SK-N-SH (cell line): ENCODE measurements at regions of chr22 and their contacts with region 1.

Region 1: DNA sequence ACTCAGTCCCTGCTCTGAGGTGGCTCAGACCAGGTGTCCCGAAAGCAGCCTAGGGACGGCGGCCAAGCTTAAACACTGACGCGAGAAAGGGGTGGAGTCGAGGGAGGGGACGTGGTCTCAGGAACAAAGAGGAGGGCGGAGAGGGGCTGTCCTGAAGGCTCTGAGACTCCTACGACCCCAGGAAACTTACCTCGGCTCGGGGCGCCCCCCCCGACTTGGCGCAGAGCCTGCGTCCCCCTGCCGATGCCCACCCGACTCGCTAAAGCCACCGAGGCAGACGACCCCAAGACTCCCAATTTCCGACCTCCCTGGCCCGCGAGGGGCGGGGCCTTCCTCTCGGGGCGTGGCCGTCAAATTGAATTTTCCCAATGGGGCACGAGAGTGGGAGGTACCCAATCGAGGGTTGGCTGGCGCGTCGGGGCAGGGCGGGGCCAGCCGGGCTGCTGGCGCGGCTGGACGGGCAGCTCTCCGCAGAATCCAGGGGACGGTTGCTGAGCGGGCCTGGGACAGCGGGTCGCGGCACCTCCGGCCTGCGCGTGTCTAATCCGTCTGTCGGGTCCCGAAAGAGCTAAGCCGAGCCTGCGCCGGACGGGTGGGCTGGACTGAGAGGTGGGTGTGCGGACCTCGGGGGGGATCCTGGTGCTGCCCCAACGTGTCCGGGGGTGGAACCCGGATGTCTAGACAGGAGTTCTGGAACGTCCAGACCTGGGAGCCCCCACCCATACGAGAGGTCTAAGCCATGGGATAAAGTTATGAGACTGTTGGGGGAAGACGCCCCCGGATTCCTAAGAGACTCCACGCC is at the start of gene SMTN:
- DNase-seq: peak; percentile 97
- H3K4me3 ChIP-seq: peak within 1 kb of the TSS; percentile 86 to 89
- H3K27ac ChIP-seq: peak within 1 kb of the TSS; percentile 71 to 94
- H3K4me1 ChIP-seq: peaks cover 21 to 40% of the 10 kb centered on the region in 2 experiments; a peak in 2 of 4 replicates
- H3K27me3 ChIP-seq: no peaks in the 10 kb centered on the region
- CTCF ChIP-seq: peak; percentile 10; the same call in 1 of the 2 replicates
- EP300 ChIP-seq: no peak
- RAD21 ChIP-seq: no peak
- polyA plus RNA-seq, gene SMTN: 12.5 and 30.4 TPM in 2 replicates

Region 2: DNA sequence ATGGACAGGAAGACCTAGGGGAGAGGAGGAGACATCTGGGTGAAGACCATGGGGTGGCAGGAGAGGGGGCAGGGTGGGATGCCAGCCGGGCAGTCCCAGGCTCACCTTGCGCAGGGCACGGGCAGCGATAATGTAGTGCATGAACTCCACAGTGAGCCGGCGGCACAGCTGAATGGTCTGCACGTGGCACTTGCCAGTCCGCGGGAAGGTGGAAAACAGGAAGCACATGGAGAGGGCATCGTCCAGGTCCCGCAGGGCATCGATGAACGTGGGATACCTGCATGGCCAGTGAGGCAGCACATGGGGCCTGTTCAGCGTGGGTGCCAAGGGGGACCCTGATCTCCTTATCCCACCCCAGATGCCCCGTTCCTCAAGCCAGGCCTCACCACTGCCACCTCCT is 496.6 kb before region 1 on chr22:
- CTCF ChIA-PET with region 1: no interaction called
- POLR2A ChIA-PET with region 1: no interaction called
- DNase-seq: no peak
- H3K4me3 ChIP-seq: no peak overlapping the region
- H3K27ac ChIP-seq: no peak overlapping the region
- H3K4me1 ChIP-seq: no peaks in the 10 kb centered on the region
- H3K27me3 ChIP-seq: no peaks in the 10 kb centered on the region
- CTCF ChIP-seq: no peak
- EP300 ChIP-seq: no peak
- RAD21 ChIP-seq: no peak

Region 3: DNA sequence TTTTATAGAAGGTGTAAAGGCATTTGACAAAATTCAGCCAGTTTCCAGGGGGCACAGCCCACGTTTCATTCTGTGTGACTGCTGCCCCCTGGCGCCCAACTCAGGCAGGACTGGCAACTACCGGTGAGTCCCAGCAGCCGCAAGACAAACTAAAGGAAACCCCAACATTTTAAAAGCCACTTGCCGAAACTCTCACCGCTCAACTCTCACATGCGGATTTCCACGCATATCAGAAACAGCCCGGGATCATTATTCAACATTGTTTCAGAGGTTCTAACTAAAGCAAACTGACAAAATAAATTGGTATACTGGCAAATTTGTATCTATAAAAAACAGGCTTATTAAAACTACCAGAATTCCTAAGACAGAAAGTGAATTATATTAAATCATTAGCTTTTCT is 160.6 kb before region 1 on chr22:
- CTCF ChIA-PET with region 1: interaction called, 26 read pairs
- POLR2A ChIA-PET with region 1: interaction called, 6 read pairs
- DNase-seq: peak; percentile 84
- H3K4me3 ChIP-seq: peak overlapping the region in 1 of 2 experiments; percentile 23; a peak in 1 of 4 replicates
- H3K27ac ChIP-seq: no peak overlapping the region
- H3K4me1 ChIP-seq: peaks cover 0 to 10% of the 10 kb centered on the region in 2 experiments; a peak in 1 of 4 replicates
- H3K27me3 ChIP-seq: no peaks in the 10 kb centered on the region
- CTCF ChIP-seq: peak; percentile 96
- EP300 ChIP-seq: no peak
- RAD21 ChIP-seq: peak; percentile 89

Region 4: DNA sequence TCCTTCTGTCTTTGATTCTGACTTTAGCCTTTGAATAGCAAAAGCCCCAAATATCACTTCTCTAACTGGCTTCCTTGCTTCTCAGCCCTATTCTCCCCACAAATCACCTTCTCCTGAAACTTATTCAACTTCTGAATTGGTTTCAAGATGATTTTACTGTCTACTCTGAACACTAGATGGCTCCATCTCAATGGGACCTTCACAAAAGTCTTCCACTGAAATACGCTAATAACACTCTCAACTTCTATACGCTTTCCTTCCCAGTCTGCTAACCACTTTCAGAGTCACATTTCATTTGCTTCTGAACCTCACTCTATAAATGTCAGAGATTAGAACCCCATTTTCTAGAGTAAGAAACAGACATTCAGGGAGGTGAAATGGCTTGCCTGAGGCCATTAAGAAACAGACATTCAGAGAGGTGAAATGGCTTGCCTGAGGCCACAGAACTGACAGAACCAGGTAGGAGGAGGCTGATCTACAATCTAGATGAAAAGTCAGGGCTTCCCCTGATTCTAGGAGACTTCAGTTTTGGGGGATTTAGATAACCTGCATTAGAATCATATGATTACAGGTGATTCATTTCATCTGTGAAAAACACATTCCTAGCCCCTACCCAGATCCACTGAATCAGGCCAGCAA is 133.1 kb before region 1 on chr22:
- CTCF ChIA-PET with region 1: interaction called, 72 read pairs
- POLR2A ChIA-PET with region 1: interaction called, 7 read pairs
- DNase-seq: peak; percentile 38
- H3K4me3 ChIP-seq: no peak overlapping the region
- H3K27ac ChIP-seq: no peak overlapping the region; a peak in 1 of 4 replicates
- H3K4me1 ChIP-seq: peaks cover 0 to 12% of the 10 kb centered on the region in 2 experiments; a peak in 1 of 4 replicates
- H3K27me3 ChIP-seq: no peaks in the 10 kb centered on the region
- CTCF ChIP-seq: peak; percentile 67
- EP300 ChIP-seq: no peak
- RAD21 ChIP-seq: peak; percentile 73

Region 5: GRCh38 chr22:31046539-31047226 is 34.4 kb before region 1 on chr22:
- CTCF ChIA-PET with region 1: interaction called, 10 read pairs
- POLR2A ChIA-PET with region 1: interaction called, 3 read pairs
- DNase-seq: peak; percentile 31
- H3K4me3 ChIP-seq: no peak overlapping the region
- H3K27ac ChIP-seq: no peak overlapping the region
- H3K4me1 ChIP-seq: no peaks in the 10 kb centered on the region; a peak in 1 of 4 replicates
- H3K27me3 ChIP-seq: no peaks in the 10 kb centered on the region
- CTCF ChIP-seq: no peak
- EP300 ChIP-seq: no peak
- RAD21 ChIP-seq: no peak

Region 6: GRCh38 chr22:31098632-31099110 is 17.6 kb after region 1 on chr22:
- CTCF ChIA-PET with region 1: interaction called, 19 read pairs
- POLR2A ChIA-PET with region 1: interaction called, 7 read pairs
- DNase-seq: peak; percentile 58
- H3K4me3 ChIP-seq: no peak overlapping the region
- H3K27ac ChIP-seq: no peak overlapping the region
- H3K4me1 ChIP-seq: no peaks in the 10 kb centered on the region; a peak in 1 of 4 replicates
- H3K27me3 ChIP-seq: no peaks in the 10 kb centered on the region
- CTCF ChIP-seq: no peak
- EP300 ChIP-seq: no peak
- RAD21 ChIP-seq: no peak

Region 7: GRCh38 chr22:31139866-31140716 is 59.0 kb after region 1 on chr22 and contains the start of gene PLA2G3:
- CTCF ChIA-PET with region 1: interaction called, 10 read pairs
- POLR2A ChIA-PET with region 1: interaction called, 3 read pairs
- DNase-seq: peak; percentile 23
- H3K4me3 ChIP-seq: no peak within 1 kb of the TSS
- H3K27ac ChIP-seq: no peak within 1 kb of the TSS
- H3K4me1 ChIP-seq: peaks cover 0 to 32% of the 10 kb centered on the region in 2 experiments; a peak in 2 of 4 replicates
- H3K27me3 ChIP-seq: peaks cover 4% of the 10 kb centered on the region; the same call in 1 of the 2 replicates
- CTCF ChIP-seq: no peak
- EP300 ChIP-seq: no peak
- RAD21 ChIP-seq: no peak
- polyA plus RNA-seq, gene PLA2G3: not detected in 2 replicates

Region 8: DNA sequence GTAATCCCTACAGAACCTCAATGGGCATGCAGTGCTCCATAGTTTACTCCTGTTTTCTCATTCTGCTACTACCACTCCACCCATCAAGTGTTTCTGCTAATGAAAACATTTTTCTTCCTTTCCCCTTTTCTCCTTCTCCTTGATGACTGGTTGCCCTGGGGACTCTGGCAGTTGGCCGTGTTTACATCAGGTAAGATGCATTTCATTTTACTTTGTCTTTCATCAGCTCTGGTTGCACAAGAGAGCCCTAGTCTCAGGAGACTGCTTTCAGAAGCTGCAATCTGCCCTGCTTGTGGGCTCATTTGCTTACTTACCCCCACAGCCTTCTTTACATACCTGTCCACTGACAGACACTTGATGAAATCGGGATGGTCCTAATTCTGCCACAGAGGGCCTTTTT is 111.5 kb after region 1 on chr22:
- CTCF ChIA-PET with region 1: no interaction called
- POLR2A ChIA-PET with region 1: no interaction called
- DNase-seq: no peak
- H3K4me3 ChIP-seq: no peak overlapping the region
- H3K27ac ChIP-seq: no peak overlapping the region
- H3K4me1 ChIP-seq: no peaks in the 10 kb centered on the region
- H3K27me3 ChIP-seq: no peaks in the 10 kb centered on the region
- CTCF ChIP-seq: no peak
- EP300 ChIP-seq: no peak
- RAD21 ChIP-seq: no peak